CD8-positive, alpha-beta memory T cell (primary cell): ENCODE measurements at regions of chr6 and their contacts with region 1.

Region 1: DNA sequence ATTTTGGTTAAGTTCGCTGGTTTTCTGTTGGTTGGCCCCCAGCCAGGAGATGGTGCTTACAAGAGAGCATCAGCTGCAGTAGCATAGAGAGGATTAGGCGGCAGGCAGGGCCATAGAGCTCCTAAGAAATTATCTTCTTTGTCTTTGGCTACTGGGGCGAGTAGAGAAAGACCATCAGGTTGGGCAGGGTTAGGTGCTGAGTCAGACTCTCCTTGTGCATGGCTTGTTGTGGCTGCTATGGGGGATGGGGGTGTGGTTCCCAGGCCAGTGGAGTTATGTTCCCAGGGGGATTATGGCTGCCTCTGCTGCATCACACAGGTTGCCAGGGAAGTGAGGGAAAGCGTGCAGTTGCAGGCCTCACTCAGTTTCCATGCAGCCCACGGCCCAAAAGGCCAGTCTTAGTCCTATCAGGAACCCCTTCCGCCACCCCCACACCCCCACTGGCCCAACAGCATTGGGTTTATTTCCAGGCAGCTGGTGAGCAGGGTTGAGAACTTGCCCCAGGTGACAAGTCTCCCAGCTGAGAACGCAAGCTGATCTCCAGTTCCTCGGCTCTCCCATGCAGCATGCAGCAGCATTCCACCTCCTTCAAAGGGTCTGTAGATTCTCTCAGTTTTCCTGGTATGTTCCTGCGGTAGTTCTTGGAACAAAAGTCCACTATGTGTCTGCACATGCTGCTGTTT is 243.7 kb downstream of the UTRN start:
- DNase-seq: no peak
- H3K4me3 ChIP-seq: no peak overlapping the region
- H3K4me3 Mint-ChIP-seq: no peak overlapping the region
- H3K27ac ChIP-seq: no peak overlapping the region
- H3K27ac Mint-ChIP-seq: peak overlapping the region in 2 of 8 donors; percentile 55 to 63
- H3K4me1 ChIP-seq: no peaks in the 10 kb centered on the region
- H3K4me1 Mint-ChIP-seq: peaks cover 20 to 30% (median 29%) of the 10 kb centered on the region in 3 donors
- H3K27me3 ChIP-seq: no peaks in the 10 kb centered on the region
- H3K27me3 Mint-ChIP-seq: no peaks in the 10 kb centered on the region

Region 2: GRCh38 chr6:144769142-144769541 is 240.3 kb after region 1 on chr6:
- CTCF ChIA-PET with region 1: no interaction called
- POLR2A ChIA-PET with region 1: interaction called, 13 read pairs
- DNase-seq: no peak
- H3K4me3 ChIP-seq: no peak overlapping the region
- H3K4me3 Mint-ChIP-seq: no peak overlapping the region
- H3K27ac ChIP-seq: no peak overlapping the region
- H3K27ac Mint-ChIP-seq: peak overlapping the region in 1 of 8 donors; percentile 61
- H3K4me1 ChIP-seq: no peaks in the 10 kb centered on the region
- H3K4me1 Mint-ChIP-seq: peaks cover 12 to 32% (median 13%) of the 10 kb centered on the region in 3 donors
- H3K27me3 ChIP-seq: no peaks in the 10 kb centered on the region
- H3K27me3 Mint-ChIP-seq: no peaks in the 10 kb centered on the region